ENCODE measurements at regions of chr7 and their contacts with region 1.

Region 1: DNA sequence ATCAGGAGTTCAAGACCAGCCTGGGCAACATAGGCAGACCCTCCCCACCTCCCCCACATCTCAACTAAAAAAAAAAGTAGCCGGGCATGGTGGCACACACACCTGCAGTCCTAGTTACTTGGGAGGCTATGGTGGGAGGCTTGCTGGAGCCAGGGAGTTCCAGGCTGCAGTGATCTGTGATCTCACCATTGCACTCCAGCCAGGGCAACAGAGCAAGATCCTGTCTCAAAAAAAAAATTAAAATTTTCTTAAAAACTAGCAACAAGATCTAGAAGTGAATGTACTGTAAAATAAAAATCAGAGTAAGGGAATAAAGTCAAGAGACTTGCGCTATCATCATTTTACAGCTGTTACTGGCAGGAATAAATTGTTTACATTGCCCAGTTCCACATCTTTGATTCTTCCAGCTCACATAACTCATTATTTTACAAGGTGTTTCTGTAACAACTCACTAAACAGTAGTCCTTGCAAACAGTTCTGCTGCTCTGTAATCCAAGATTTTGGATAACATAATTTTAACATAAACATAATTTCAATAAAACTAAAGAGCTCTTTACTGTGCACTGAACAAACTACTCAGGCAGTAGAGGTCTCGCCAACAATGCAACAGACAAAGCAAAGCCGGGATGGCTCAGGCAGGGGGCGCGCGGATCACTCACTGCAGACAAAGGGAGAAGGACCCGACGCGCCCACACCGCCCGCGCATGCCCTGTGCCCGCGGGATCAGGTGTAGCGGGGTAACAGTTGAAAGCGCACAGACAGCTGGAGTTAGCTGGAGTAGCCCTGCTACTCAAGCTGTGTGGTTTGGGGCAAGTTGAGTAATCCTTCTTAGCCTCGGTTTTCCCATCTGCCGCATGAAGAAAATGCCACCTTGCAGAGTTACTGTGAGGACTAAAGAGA is 73.3 kb upstream of the NFE2L3 start:
- DNase-seq: peak; percentile 70
- CTCF ChIP-seq: peak; percentile 63

Region 2: GRCh38 chr7:26365077-26365900 is 286.6 kb after region 1 on chr7:
- in situ Hi-C with region 1: loop called (anchors 25 kb)
- DNase-seq: peak; percentile 34
- CTCF ChIP-seq: peak; percentile 66

Region 3: DNA sequence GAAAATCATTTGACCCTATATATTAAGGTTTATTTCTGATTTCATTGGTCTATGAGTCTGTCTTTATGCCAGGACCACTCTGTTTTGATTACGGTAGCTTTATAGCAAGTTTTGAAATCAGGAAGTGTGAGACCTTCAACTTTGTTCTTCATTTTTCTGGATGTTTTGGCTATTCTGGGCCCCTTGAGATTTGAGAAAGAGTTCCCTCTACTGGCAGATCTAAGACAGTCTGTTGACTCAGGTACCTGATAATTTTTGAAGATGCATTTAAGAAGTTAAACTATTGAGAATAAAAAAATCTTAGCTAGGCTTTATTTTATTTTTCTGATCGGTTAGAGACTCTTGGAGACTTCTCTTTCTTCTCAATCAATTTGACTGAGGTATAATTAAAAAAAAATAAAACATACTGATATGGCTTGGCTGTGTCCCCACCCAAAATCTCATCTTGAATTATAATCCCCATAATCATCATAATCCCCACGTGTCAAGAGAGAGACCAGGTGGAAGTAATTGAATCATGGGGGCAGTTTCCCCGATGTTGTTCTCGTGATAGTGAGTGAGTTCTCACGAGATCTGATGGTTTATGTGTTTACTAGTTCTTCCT is 422.2 kb after region 1 on chr7:
- in situ Hi-C with region 1: loop called (anchors 25 kb)
- DNase-seq: peak; percentile 61
- CTCF ChIP-seq: peak; percentile 71

Region 4: DNA sequence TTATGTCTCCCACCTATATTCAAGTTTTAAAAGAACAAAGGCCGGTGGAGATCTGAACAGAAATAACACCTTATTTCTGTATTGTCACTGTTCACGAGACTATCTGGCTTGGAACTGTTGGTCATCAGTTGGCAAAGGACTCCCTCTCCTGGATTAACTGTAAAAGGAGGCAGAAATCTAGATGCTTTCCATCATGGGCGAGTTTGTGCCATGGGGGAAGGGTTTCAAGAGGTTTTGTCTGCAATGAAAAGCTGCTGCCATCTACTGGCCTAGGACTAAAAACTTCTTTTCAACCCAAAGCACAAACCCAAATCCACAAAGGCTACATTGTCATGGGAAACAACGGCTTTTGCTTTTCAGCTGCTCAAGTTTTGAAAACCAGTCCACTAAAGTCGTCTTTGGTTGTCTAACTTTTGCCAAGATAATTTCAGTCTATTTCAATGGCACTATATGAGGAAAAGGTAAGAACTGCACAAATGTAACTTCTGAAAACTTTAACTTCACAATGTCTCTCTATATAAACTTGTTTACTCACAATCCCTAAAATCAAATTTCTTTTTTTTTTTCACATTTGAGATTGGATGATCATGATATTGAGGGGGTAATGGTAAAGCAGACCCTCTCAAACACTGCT is 588.9 kb after region 1 on chr7:
- in situ Hi-C with region 1: loop called (anchors 25 kb)
- DNase-seq: no peak
- CTCF ChIP-seq: peak; percentile 65

Measured in GM13977 (cell line).